Kidney (tissue), 22 donors: ENCODE measurements at regions of chr7 and their contacts with region 1.

Region 1: DNA sequence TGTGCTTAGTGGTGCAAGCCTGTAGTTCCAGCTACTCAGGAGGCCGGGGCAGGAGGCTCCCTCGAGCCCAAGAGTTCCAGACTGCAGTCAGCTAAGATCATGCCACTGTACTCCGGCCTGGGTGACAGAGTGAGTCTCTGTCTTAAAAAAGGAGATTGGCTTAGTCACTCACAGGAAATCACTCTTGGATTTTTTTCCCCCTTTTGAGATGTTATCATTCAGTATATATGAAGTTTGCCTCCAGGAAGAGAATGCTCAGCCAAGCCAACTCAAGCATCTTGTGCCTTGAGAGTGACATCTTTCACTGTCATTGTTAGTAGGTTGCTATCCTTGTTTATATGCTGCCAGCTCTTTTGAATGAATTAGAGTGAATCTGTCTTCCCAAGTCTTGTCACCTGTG is 28.0 kb downstream of the NIPSNAP2 start:
- DNase-seq: no peak
- H3K4me3 ChIP-seq: no peak overlapping the region
- H3K27ac ChIP-seq: no peak overlapping the region
- H3K4me1 ChIP-seq: no peaks in the 10 kb centered on the region
- H3K27me3 ChIP-seq: no peaks in the 10 kb centered on the region
- CTCF ChIP-seq: no peak

Region 2: DNA sequence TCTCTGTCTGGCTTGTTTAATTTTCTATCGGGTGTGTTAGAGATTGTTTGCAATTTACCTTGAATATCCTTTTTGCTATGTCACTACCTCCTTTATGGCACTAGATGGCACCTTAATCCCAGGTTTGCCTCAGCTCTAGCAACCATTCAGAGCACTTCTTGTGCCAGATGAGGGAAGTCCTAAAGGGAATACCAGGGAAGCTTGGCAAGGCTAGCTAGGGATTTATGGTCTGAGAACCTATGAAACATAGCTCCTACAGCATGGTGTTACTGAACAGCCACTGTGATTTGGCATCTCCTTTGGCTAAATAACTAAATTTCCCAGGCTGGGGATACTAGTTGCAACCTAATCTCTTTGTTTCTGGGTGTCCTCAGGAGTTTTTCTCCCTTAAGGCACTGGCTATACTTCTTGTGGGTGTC is 351.1 kb before region 1 on chr7:
- intact Hi-C with region 1: loop called (anchors 10 kb)
- DNase-seq: peak in 4 of 5 donors; percentile 50 to 93 (median 80)
- H3K4me3 ChIP-seq: no peak overlapping the region
- H3K27ac ChIP-seq: no peak overlapping the region
- H3K4me1 ChIP-seq: no peaks in the 10 kb centered on the region
- H3K27me3 ChIP-seq: no peaks in the 10 kb centered on the region
- CTCF ChIP-seq: peak; percentile 82

Region 3: DNA sequence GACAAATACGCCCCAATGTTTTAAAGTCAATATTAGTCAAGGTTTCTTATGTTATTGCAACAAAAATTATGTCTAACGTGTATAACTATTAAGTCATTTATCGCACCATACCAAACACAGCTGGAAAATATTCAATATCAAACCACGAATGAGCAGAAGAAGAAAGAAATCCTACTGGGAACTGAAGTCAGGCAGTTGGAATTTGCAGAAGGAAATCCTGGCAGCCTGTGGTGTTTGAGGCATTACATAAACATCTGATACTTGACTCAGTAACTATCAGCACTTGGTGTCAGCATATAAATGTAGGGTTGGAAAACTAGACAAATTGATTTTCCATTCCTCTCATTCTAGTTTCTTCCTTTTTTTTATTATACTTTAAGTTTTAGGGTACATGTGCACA is 207.3 kb after region 1 on chr7:
- intact Hi-C with region 1: no loop called
- DNase-seq: no peak
- H3K4me3 ChIP-seq: no peak overlapping the region
- H3K27ac ChIP-seq: no peak overlapping the region
- H3K4me1 ChIP-seq: no peaks in the 10 kb centered on the region
- H3K27me3 ChIP-seq: no peaks in the 10 kb centered on the region
- CTCF ChIP-seq: no peak